ENCODE measurements at regions of chr15 and their contacts with region 1.

Region 1: GRCh38 chr15:64731012-64731806 is 44.2 kb downstream of the RBPMS2 start:
- DNase-seq: peak; percentile 92
- H3K4me3 Mint-ChIP-seq: no peak overlapping the region
- H3K27ac Mint-ChIP-seq: no peak overlapping the region
- H3K4me1 Mint-ChIP-seq: peaks cover 9% of the 10 kb centered on the region
- H3K27me3 Mint-ChIP-seq: peaks cover 30% of the 10 kb centered on the region

Region 2: GRCh38 chr15:64209680-64210334 is 521.4 kb before region 1 on chr15:
- CTCF ChIA-PET with region 1: interaction called, 11 read pairs
- DNase-seq: no peak
- H3K4me3 Mint-ChIP-seq: no peak overlapping the region
- H3K27ac Mint-ChIP-seq: no peak overlapping the region
- H3K4me1 Mint-ChIP-seq: peaks cover 3% of the 10 kb centered on the region
- H3K27me3 Mint-ChIP-seq: no peaks in the 10 kb centered on the region

Region 3: DNA sequence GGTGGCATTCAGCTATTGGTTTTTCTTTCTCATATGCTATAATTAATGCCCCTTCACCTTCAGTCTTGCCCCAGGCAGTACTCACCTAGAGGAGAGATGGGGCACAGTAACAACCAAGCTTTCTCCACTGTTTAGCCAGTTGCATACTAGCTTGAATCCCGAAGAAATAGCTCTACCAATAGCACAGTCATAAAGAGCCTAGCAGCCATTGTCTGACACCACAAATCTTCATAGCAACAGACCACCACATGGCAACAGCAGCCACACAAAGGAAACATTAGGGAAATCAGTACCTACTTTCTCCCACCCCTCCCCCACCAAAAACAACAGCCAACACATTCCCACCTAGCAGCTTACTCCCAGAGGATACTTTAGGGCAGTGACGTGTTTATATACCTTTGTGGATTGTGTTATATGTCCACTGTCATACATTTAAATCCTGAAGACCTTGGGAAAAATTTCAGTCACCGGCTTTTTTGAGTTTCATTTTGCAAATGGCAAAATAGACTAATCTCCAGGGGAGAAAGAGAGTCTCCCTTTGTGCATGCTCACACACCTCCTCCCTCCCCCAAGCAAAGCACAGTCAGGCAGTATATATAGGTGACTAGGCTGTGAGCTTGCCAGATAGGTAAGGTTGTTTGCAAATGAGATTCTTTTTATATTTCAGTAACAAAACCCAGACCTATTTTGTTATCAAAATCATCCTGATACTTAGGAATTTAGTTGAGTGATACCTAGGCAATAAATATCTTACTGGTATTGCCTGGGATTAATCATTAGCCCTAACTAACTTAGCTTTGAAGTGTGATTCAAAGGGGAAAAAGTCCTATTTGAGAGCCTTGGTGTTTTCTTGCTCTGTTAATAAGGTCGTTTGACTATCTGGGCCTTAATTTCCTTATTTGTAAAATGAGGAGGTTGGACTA is 96.4 kb before region 1 on chr15:
- CTCF ChIA-PET with region 1: no interaction called
- DNase-seq: peak; percentile 33
- H3K4me3 Mint-ChIP-seq: peak overlapping the region; percentile 2
- H3K27ac Mint-ChIP-seq: peak overlapping the region; percentile 70
- H3K4me1 Mint-ChIP-seq: peaks cover 58% of the 10 kb centered on the region
- H3K27me3 Mint-ChIP-seq: no peaks in the 10 kb centered on the region

Region 4: DNA sequence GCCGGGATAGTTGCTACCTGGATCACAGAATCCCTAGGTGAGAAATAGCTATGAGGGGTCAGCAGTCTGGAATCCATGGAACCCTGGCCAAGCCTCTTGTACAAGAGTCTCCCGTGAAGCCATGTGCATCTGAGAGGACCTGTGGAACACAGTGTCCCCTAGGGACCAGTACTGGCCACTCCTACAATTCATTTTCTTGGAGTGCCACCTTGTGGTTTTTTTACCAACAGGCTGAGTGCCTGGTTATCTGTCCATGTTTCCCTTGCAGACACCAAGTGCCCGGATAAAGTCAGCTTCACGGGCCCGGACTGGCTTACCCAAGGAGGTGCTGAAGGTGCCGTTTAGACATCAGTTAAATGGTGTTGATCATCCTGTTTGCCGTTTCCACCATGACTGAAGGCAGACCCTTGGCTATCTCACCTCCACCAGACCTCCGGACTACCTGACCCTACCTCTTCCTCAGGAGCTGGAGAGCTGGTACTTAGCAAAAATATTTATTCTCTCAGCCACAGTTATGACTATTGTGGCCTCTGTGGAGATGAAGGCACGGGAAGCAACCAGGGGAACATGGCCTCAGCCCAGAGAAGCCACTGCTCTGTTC is 49.7 kb before region 1 on chr15:
- CTCF ChIA-PET with region 1: interaction called, 78 read pairs
- DNase-seq: peak; percentile 26
- H3K4me3 Mint-ChIP-seq: no peak overlapping the region
- H3K27ac Mint-ChIP-seq: no peak overlapping the region
- H3K4me1 Mint-ChIP-seq: no peaks in the 10 kb centered on the region
- H3K27me3 Mint-ChIP-seq: no peaks in the 10 kb centered on the region

Region 5: GRCh38 chr15:64717735-64718495 is 13.3 kb before region 1 on chr15:
- CTCF ChIA-PET with region 1: interaction called, 18 read pairs
- DNase-seq: peak; percentile 31
- H3K4me3 Mint-ChIP-seq: no peak overlapping the region
- H3K27ac Mint-ChIP-seq: no peak overlapping the region
- H3K4me1 Mint-ChIP-seq: peaks cover 13% of the 10 kb centered on the region
- H3K27me3 Mint-ChIP-seq: peaks cover 12% of the 10 kb centered on the region

Region 6: GRCh38 chr15:64905119-64905831 is 174.1 kb after region 1 on chr15:
- CTCF ChIA-PET with region 1: interaction called, 10 read pairs
- DNase-seq: peak; percentile 87
- H3K4me3 Mint-ChIP-seq: peak overlapping the region; percentile 29
- H3K27ac Mint-ChIP-seq: peak overlapping the region; percentile 20
- H3K4me1 Mint-ChIP-seq: peaks cover 44% of the 10 kb centered on the region
- H3K27me3 Mint-ChIP-seq: peaks cover 12% of the 10 kb centered on the region

Region 7: DNA sequence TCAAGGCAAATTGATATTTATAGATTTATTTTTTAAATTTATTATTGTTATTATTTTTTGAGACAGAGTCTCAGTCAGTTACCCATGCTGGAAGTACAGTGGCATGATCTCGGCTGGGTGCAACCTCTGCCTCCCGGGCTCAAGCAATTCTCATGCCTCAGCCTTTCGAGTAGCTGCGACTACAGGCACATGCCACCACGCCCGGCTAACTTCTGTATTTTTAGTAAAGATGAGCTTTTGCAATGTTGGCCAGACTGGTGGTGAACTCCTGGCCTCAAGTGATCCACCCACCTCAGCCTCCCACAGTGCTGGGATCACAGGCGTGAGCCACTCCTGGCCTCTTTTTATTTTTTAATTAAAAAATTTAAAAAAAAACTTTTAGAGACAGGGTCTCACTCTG is 239.5 kb after region 1 on chr15:
- CTCF ChIA-PET with region 1: no interaction called
- DNase-seq: no peak
- H3K4me3 Mint-ChIP-seq: no peak overlapping the region
- H3K27ac Mint-ChIP-seq: no peak overlapping the region
- H3K4me1 Mint-ChIP-seq: peaks cover 4% of the 10 kb centered on the region
- H3K27me3 Mint-ChIP-seq: no peaks in the 10 kb centered on the region